A549 (cell line): ENCODE measurements at regions of chr20 and their contacts with region 1.

Region 1: GRCh38 chr20:10553326-10553984 is 118.3 kb downstream of the SLX4IP start:
- DNase-seq: peak; percentile 54 to 85
- ATAC-seq: peak; percentile 70 to 84; a peak in 5 of 6 replicates
- H3K4me3 ChIP-seq: no peak overlapping the region
- H3K27ac ChIP-seq: peak overlapping the region; percentile 37 to 46; a peak in 4 of 6 replicates
- H3K4me1 ChIP-seq: peaks cover 55% of the 10 kb centered on the region
- CTCF ChIP-seq: peak; percentile 97
- EP300 ChIP-seq: no peak
- POLR2A ChIP-seq: no peak
- RAD21 ChIP-seq: peak; percentile 98 to 99

Region 2: DNA sequence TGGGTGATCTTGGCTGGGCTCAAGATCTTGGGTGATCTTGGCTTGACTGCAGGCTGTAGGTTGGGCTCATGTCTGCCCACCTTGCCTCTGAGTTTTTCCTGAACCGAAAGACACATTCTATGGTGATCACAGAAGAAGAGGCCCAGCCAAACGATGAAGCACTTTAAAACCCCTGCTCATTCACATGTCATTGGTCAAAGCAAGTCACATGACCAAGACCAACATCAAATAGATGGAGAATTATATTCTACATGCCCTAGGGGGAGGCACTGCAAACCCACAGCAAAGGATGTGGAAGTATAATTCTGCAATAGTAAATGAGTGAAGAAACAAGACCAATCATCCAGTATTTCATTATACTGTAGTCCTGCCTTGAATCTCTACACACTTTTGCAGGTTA is 410.8 kb before region 1 on chr20:
- CTCF ChIA-PET with region 1: no interaction called
- POLR2A ChIA-PET with region 1: no interaction called
- DNase-seq: no peak
- ATAC-seq: no peak
- H3K4me3 ChIP-seq: no peak overlapping the region
- H3K27ac ChIP-seq: no peak overlapping the region
- H3K4me1 ChIP-seq: no peaks in the 10 kb centered on the region
- CTCF ChIP-seq: no peak
- EP300 ChIP-seq: no peak
- POLR2A ChIP-seq: no peak
- RAD21 ChIP-seq: no peak

Region 3: GRCh38 chr20:10508468-10509251 is 44.8 kb before region 1 on chr20:
- CTCF ChIA-PET with region 1: no interaction called
- POLR2A ChIA-PET with region 1: no interaction called
- DNase-seq: peak in 1 of 2 experiments; percentile 29
- ATAC-seq: peak in 1 of 2 experiments; percentile 12; a peak in 2 of 6 replicates
- H3K4me3 ChIP-seq: no peak overlapping the region
- H3K27ac ChIP-seq: peak overlapping the region; percentile 88 to 89
- H3K4me1 ChIP-seq: peaks cover 74% of the 10 kb centered on the region
- CTCF ChIP-seq: no peak
- EP300 ChIP-seq: no peak
- POLR2A ChIP-seq: no peak
- RAD21 ChIP-seq: no peak

Region 4: DNA sequence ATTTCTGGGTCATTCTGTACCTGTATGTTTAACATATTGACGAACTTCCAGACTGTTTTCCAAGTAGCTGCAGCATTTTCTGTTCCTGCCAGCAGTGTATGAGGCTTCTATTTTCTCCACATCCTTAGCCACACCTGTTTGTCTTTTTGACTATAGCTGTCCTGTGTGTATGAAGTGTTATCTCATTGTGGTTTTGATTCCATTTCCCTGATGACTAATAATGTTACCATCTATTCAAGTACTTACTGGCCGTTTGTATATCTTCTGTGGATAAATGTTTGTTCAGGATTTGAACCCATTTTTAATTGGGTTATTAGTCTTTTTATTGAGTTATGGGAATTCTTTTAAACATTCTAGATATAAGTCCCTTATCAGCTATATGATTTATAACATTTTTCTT is 25.2 kb after region 1 on chr20:
- CTCF ChIA-PET with region 1: interaction called, 16 read pairs
- POLR2A ChIA-PET with region 1: no interaction called
- DNase-seq: peak in 1 of 2 experiments; percentile 59
- ATAC-seq: peak; percentile 60 to 77
- H3K4me3 ChIP-seq: no peak overlapping the region
- H3K27ac ChIP-seq: no peak overlapping the region
- H3K4me1 ChIP-seq: peaks cover 46% of the 10 kb centered on the region
- CTCF ChIP-seq: no peak
- EP300 ChIP-seq: no peak
- POLR2A ChIP-seq: no peak
- RAD21 ChIP-seq: no peak

Region 5: DNA sequence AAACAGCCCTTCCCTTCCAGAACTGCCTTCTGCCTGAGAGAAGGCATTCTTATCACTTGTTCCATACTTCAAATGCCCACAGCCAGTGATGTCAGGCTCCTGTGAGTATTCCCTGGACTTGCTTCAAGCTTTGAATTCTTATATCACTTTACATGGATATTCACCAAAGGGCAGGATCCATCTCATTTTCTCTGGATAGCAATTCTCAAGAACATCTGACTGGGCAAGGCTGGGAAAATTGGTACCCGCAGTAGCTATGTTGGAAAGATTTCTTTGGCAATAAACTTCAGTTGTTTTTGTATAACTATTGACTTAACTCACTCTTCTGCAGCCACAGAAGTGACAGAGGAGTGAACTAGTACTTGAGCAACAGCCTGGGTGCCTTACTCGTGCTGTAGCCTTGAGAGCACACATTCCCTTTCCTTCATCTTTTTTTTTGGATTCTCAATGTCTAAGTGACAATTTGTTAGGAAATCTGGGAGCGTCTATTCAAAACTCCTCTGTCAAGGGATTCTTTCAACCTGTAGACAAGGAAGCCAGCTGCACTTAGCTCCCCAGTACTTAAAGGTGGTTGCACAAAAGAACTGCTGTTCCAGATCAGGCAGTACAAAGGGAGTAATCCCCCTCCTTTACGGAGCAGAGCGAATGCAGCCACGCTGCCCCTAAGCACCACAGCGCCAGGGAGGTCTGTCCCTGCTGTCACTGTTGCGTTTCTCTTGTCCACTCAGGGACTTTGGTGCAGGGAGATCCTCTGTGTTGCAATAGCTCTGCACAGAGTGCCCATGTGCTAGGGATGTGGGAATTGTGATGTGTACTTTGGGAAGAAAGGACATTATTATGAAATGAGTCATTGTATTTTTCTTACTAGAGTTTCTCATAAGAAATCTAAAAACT is 50.8 kb after region 1 on chr20:
- CTCF ChIA-PET with region 1: interaction called, 12 read pairs
- POLR2A ChIA-PET with region 1: interaction called, 4 read pairs
- DNase-seq: peak; percentile 85 to 86
- ATAC-seq: peak; percentile 94 to 95
- H3K4me3 ChIP-seq: no peak overlapping the region
- H3K27ac ChIP-seq: peak overlapping the region; percentile 65 to 79
- H3K4me1 ChIP-seq: peaks cover 37% of the 10 kb centered on the region
- CTCF ChIP-seq: no peak
- EP300 ChIP-seq: peak in 1 of 2 experiments; percentile 47; a peak in 2 of 5 replicates
- POLR2A ChIP-seq: no peak
- RAD21 ChIP-seq: peak; percentile 34 to 35; a peak in 2 of 5 replicates

Region 6: DNA sequence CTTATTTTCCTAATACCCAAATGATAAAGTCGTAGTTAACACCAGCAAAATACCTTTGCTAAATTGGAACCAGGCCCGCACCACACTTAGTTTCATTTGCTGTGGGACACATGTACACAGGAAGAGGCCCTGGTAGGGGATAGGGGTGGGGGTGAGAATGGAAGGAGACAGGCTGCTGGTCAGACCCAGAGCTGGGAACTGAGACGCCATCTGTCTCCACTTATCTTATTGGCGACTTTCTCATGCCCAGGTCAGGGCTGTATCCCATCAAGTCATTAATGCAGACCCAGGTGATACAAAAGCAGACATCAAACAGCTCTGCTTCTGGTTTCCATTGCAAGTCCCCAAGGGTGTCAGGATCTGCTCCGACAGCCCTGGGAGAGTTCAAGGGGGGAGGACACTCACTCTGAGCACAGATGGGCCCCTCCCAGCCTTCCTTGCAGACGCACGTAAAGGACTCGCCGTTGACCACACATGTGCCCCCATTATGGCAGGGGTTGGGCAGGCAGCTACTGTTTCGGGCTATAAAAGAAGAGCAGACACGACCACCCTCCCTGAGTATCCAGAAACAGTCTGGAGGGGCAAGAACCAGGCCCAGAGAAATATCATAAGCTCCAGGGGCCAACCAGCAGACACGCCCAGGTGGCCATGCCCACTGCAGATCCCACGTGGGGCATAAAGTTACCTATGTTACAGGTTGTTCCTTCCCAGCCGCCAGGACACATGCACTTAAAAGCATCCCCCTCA is 91.2 kb after region 1 on chr20:
- CTCF ChIA-PET with region 1: interaction called, 16 read pairs
- POLR2A ChIA-PET with region 1: no interaction called
- DNase-seq: no peak
- ATAC-seq: no peak
- H3K4me3 ChIP-seq: no peak overlapping the region
- H3K27ac ChIP-seq: no peak overlapping the region
- H3K4me1 ChIP-seq: peaks cover 10% of the 10 kb centered on the region; the same call in 1 of the 3 replicates
- CTCF ChIP-seq: no peak
- EP300 ChIP-seq: no peak
- POLR2A ChIP-seq: no peak
- RAD21 ChIP-seq: no peak